Aorta (tissue), 5 donors: ENCODE measurements at regions of chr14 and their contacts with region 1.

Region 1: GRCh38 chr14:74552623-74553022 is 59.1 kb downstream of the ISCA2 start:
- DNase-seq: peak; percentile 92 to 95
- ATAC-seq: peak; percentile 58
- H3K4me3 ChIP-seq: no peak overlapping the region
- H3K27ac ChIP-seq: peak overlapping the region; percentile 44 to 72
- H3K4me1 ChIP-seq: no peaks in the 10 kb centered on the region
- H3K27me3 ChIP-seq: no peaks in the 10 kb centered on the region

Region 2: GRCh38 chr14:74595006-74595735 is 42.5 kb after region 1 on chr14:
- intact Hi-C with region 1: loop called in 1 of 2 experiments (anchors 5 kb)
- DNase-seq: peak; percentile 91
- ATAC-seq: peak; percentile 76
- H3K4me3 ChIP-seq: no peak overlapping the region
- H3K27ac ChIP-seq: peak overlapping the region; percentile 34 to 87
- H3K4me1 ChIP-seq: peaks cover 8 to 12% of the 10 kb centered on the region in 2 donors
- H3K27me3 ChIP-seq: no peaks in the 10 kb centered on the region